ENCODE measurements at regions of chr12 and their contacts with region 1.

Region 1: DNA sequence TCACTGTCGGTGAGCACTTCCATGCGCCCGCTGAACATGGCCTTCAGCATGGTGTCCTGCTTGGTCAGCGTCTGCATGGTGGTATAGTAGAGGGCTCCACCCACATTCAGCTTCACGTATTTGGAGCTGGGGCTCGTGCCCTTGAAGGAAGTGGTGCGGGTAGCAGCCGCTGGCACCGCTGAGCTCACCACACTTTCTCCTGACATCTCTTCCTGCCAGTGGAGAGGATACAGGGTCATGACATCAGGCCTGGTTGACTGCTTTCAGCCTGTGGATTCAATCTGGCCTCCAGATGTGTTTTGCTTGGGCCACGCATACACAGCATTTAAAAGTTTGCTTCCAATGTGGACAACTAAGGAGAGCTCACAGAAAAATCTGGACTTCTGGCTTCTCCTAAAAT is 7.6 kb downstream of the KCTD10 start:
- DNase-seq: no peak
- H3K4me3 ChIP-seq: no peak overlapping the region
- H3K27ac ChIP-seq: peak overlapping the region; percentile 31
- H3K27me3 ChIP-seq: no peaks in the 10 kb centered on the region
- CTCF ChIP-seq: no peak

Region 2: GRCh38 chr12:111462210-111462769 is 1992.8 kb after region 1 on chr12:
- CTCF ChIA-PET with region 1: no interaction called
- POLR2A ChIA-PET with region 1: interaction called, 10 read pairs
- DNase-seq: peak; percentile 72
- H3K4me3 ChIP-seq: no peak overlapping the region
- H3K27ac ChIP-seq: peak overlapping the region; percentile 59
- H3K27me3 ChIP-seq: no peaks in the 10 kb centered on the region
- CTCF ChIP-seq: no peak

Measured in AG04450 (cell line).